OCI-LY7 (cell line): ENCODE measurements at regions of chrX and their contacts with region 1.

Region 1: GRCh38 chrX:53317365-53318069 is 36.1 kb upstream of the IQSEC2 start:
- DNase-seq: peak; percentile 61
- H3K4me3 ChIP-seq: no peak overlapping the region
- H3K27ac ChIP-seq: no peak overlapping the region
- H3K4me1 ChIP-seq: peaks cover 8% of the 10 kb centered on the region
- CTCF ChIP-seq: peak; percentile 76

Region 2: GRCh38 chrX:53128097-53128749 is 189.3 kb before region 1 on chrX:
- CTCF ChIA-PET with region 1: no interaction called
- POLR2A ChIA-PET with region 1: no interaction called
- intact Hi-C with region 1: no loop called
- DNase-seq: no peak
- H3K4me3 ChIP-seq: no peak overlapping the region
- H3K27ac ChIP-seq: no peak overlapping the region
- H3K4me1 ChIP-seq: no peaks in the 10 kb centered on the region
- CTCF ChIP-seq: no peak

Region 3: DNA sequence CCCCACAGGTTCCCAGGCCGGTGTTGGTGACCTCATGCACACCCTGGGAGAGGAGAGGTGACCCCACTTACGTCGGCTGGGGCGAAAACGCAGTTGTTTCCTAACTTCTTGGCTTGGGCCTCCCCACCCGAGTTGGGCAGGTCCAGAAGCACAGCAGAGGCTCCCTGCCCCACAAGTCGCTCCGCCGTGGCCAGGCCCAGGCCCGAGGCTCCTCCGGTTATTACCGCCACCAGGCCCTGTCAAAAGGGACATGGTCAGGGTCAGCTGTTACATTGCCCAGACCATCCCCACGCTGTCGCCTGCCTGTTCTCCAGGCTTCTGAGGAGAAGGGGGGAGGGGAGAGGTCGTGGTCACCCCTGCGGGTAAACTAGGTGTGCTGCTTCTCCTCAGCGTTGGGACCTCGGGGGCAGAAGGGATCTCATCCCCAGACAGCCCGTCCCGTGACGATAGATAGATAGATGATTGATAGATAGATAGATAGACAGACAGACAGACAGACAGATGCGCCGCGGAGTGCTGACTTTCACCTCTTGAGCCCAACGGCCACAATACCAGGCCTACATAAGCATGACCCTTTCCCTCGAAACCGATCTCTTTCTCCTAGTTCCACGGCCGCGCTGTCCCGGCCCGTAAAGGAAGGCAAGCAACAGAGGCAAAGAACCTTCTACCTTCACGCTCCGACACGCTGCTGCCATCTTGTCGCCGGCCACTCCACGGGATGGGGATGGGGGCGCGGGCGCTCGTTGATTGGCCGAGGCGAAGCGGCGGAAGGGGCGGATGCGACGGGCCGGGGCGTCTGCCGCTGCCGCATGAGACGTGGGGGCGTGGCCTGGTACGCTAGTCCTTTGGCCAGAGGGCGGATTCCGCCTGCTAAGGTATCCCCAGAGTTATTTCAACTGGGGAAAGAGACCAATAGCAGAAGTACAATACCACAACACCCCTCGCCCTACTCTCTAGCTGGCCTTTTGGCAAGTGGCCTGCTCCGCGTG is 116.4 kb after region 1 on chrX and contains the start of gene HSD17B10:
- CTCF ChIA-PET with region 1: no interaction called
- POLR2A ChIA-PET with region 1: no interaction called
- intact Hi-C with region 1: loop called (anchors 1 kb)
- DNase-seq: peak; percentile 91
- H3K4me3 ChIP-seq: peak within 1 kb of the TSS; percentile 96
- H3K27ac ChIP-seq: peak within 1 kb of the TSS; percentile 52
- H3K4me1 ChIP-seq: peaks cover 15% of the 10 kb centered on the region
- CTCF ChIP-seq: no peak
- total RNA-seq, gene HSD17B10: 106 and 107 TPM in 2 replicates

Region 4: GRCh38 chrX:53481816-53482465 is 164.4 kb after region 1 on chrX:
- CTCF ChIA-PET with region 1: interaction called, 4 read pairs
- POLR2A ChIA-PET with region 1: no interaction called
- intact Hi-C with region 1: loop called (anchors 1 kb)
- DNase-seq: peak; percentile 60
- H3K4me3 ChIP-seq: no peak overlapping the region
- H3K27ac ChIP-seq: no peak overlapping the region
- H3K4me1 ChIP-seq: no peaks in the 10 kb centered on the region
- CTCF ChIP-seq: peak; percentile 77

Region 5: GRCh38 chrX:53831662-53832635 is 514.4 kb after region 1 on chrX:
- CTCF ChIA-PET with region 1: no interaction called
- POLR2A ChIA-PET with region 1: no interaction called
- intact Hi-C with region 1: loop called (anchors 10 kb)
- DNase-seq: peak; percentile 50
- H3K4me3 ChIP-seq: no peak overlapping the region
- H3K27ac ChIP-seq: no peak overlapping the region
- H3K4me1 ChIP-seq: no peaks in the 10 kb centered on the region
- CTCF ChIP-seq: peak; percentile 76